Right ventricle myocardium superior (tissue), 1 donor: ENCODE measurements at regions of chr4 and their contacts with region 1.

Region 1: DNA sequence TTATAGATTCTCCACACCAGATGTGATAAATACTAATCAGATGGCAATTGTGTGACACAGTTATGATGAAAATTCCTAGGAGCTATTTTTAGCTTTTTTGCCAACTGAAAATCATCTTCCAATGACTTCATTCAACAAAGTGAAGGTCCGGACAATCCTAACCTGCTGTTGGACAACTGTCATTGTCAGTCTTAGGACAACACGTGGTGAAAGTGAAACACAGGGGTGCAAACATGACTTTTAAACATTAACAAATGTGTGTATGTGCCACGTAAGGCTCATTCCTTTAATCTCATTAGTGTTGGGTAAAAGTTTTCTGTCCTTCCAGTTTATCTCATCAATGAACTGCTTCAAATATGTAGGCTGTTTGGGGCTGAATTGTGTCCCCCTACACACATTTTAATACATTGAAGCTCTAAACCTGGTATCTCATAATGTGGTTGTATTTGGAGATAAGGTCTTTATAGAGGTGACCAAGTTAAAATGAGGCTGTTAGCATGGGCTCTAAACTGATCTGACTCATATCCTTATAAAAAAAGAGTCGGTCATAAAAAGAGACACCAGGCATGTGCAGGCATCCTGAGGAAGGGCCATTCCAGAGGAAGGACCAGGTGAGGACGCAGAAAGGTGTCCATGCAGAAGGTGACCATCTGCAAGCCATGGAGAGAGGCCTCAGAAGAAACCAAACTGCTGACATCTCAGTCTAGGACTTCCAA is 41.2 kb upstream of the SMAD1 start:
- DNase-seq: no peak
- ATAC-seq: no peak

Region 2: GRCh38 chr4:145289403-145290076 is 150.9 kb before region 1 on chr4:
- intact Hi-C with region 1: no loop called
- DNase-seq: no peak
- ATAC-seq: no peak

Region 3: GRCh38 chr4:145589916-145590702 is 149.7 kb after region 1 on chr4:
- intact Hi-C with region 1: no loop called
- DNase-seq: no peak
- ATAC-seq: no peak

Region 4: GRCh38 chr4:145781351-145781750 is 340.9 kb after region 1 on chr4:
- intact Hi-C with region 1: loop called (anchors 5 kb)
- DNase-seq: no peak
- ATAC-seq: no peak